ENCODE measurements at regions of chr16 and their contacts with region 1.

Region 1: DNA sequence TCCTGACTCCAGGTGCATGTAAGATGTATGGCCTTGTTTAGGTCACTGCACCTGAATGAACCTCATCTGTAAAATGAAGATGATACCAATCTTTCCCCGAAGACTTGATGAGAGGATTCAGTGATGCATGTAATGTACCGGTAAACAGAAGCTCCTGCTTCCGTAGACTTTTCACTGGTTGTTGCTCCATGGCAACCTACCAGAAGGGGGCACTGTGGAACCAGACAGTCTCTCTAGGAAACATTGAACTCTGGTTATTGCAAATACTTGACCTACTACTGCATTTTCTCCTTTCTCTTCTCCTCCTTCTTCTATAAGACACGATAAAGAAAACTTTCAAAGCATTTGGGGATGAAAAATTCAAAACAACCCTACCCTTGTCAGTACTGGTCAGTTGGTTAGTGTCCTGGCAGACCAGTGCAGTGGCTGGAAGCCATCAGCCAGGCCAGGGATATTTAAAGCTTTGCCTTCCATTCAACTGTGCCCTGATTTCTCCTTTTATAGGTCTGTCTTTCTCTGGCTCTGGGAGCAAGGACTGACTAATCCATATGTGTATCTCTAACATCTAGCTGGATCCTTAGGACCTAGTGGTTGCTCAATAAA is 667.4 kb upstream of the SALL1 start:
- DNase-seq: peak; percentile 64
- H3K4me3 ChIP-seq: no peak overlapping the region
- H3K27ac ChIP-seq: no peak overlapping the region
- H3K4me1 ChIP-seq: no peaks in the 10 kb centered on the region
- H3K27me3 ChIP-seq: no peaks in the 10 kb centered on the region

Region 2: GRCh38 chr16:51875834-51876600 is 57.6 kb after region 1 on chr16:
- in situ Hi-C with region 1: no loop called
- DNase-seq: no peak
- H3K4me3 ChIP-seq: no peak overlapping the region
- H3K27ac ChIP-seq: no peak overlapping the region
- H3K4me1 ChIP-seq: peaks cover 10% of the 10 kb centered on the region
- H3K27me3 ChIP-seq: no peaks in the 10 kb centered on the region

Region 3: DNA sequence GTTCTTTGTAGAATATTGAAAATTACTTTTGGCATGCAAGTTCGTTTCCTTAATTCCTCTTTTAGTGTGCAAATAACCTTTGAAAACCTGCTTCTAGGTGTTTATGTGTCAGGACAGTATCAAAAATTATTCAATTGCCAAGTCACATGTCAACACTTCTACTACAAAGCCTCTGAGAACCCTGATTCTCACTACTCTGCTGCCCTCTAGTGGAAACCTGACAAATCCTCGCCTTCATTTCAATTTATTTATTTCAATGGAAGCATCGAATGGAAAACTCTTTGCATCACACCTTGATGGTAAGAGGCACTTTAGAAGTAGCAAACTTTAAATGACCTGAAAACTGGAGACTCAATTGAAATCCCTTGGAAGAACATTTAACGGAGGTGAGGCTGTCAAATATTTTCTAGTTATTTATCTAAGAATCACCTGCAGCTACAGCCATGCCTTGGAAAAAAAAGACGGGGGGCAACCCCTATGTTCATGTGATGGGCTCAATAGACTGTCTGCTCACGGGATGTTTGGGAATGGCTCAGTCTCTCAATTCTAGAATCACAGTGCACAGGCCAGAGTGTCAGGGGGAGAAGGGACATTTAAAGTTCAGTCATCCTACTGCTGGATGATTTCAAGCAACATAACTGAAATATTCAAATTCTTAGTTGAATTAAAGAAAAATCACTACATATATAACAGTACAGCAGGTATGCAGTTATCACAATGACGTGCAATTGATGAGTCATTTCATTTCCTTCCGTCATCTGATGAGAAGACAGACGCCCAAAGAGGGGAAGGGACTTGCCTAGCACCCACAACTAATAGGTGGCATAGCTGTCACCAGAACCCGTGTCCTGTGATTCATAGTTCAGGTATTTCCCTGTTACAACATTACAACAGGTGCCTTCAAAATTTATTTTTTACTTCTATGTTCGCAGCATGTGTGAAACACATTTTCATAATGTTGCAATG is 164.6 kb after region 1 on chr16:
- in situ Hi-C with region 1: loop called (anchors 10 kb)
- DNase-seq: peak; percentile 73
- H3K4me3 ChIP-seq: no peak overlapping the region
- H3K27ac ChIP-seq: no peak overlapping the region
- H3K4me1 ChIP-seq: no peaks in the 10 kb centered on the region
- H3K27me3 ChIP-seq: no peaks in the 10 kb centered on the region